Calu3 (cell line): ENCODE measurements at regions of chr11 and their contacts with region 1.

Region 1: DNA sequence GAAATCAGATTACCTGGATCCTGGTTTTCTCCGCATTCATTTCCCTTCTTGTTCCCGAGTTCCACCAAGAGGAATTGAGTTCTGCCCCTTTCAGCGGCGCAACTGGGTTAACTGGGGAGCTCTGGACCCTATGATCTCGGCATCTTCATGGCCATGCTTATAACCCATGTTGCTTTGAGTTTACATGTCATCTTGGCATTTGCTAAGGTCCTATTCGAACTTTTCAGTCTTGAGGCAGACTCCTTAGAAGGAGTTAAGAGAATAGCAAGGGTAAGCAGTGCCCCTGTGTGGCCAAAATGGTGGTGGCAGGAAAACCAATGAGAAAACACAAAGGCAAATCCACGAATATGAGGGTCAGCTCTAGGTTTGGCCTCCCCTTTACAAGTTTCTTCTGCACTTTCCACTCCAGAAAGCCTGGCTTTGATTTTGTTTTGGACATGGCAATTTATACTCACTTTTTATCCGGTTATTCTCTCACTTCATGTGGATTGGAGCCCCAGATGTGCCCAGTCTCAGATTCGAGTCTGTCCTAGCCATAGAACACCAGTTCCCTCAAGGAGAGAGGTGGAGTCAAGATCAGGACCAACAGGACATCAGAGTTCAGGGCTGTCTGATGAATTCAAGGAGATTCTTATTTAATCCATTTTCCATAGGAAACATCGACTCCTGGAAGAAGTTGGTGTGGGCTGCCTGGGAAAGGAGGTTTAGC is 55.3 kb upstream of the FBXO3 start:
- DNase-seq: peak; percentile 71
- H3K4me3 Mint-ChIP-seq: peak overlapping the region; percentile 68
- H3K27ac Mint-ChIP-seq: no peak overlapping the region
- H3K4me1 Mint-ChIP-seq: peaks cover 9% of the 10 kb centered on the region
- H3K27me3 Mint-ChIP-seq: peaks cover 29% of the 10 kb centered on the region
- CTCF ChIP-seq: peak; percentile 75

Region 2: GRCh38 chr11:33362051-33362910 is 467.3 kb before region 1 on chr11:
- CTCF ChIA-PET with region 1: no interaction called
- intact Hi-C with region 1: loop called (anchors 1 kb)
- DNase-seq: peak; percentile 17
- H3K4me3 Mint-ChIP-seq: no peak overlapping the region
- H3K27ac Mint-ChIP-seq: no peak overlapping the region
- H3K4me1 Mint-ChIP-seq: no peaks in the 10 kb centered on the region
- H3K27me3 Mint-ChIP-seq: no peaks in the 10 kb centered on the region
- CTCF ChIP-seq: peak; percentile 54

Region 3: GRCh38 chr11:33542921-33543320 is 286.7 kb before region 1 on chr11:
- CTCF ChIA-PET with region 1: no interaction called
- intact Hi-C with region 1: loop called (anchors 5 kb)
- DNase-seq: peak; percentile 73
- H3K4me3 Mint-ChIP-seq: no peak overlapping the region
- H3K27ac Mint-ChIP-seq: no peak overlapping the region
- H3K4me1 Mint-ChIP-seq: peaks cover 8% of the 10 kb centered on the region
- H3K27me3 Mint-ChIP-seq: no peaks in the 10 kb centered on the region
- CTCF ChIP-seq: peak; percentile 53

Region 4: DNA sequence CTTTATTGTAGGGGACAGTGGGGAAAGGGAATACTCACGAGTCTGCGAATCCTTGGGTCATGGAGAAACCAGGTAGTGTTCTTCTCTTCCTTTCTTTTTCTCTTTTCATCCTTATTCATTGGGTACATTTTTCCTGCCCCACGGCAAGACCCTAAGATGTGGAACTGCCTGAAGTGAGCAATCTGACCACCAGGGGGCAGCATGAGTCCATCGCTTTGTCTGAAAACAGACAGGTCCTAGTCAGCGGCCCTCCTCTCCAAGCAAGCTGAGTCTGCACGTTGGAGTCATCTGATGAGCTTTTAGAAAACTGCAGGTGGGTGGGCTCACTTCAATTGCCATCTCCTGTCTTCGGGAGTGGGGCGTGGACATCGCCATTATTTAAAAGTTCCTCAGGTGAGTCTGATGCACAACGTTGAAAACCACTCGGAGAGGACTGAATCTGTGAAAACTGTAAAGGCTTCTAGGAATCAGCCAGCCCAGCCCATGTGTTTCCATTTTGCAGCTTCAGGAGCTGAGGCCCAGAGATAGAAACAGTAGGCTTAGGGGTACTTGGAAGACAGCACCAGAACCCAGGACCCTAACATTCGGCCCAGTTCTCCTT is 21.3 kb before region 1 on chr11:
- CTCF ChIA-PET with region 1: interaction called, 25 read pairs
- intact Hi-C with region 1: loop called (anchors 1 kb)
- DNase-seq: peak; percentile 89
- H3K4me3 Mint-ChIP-seq: no peak overlapping the region
- H3K27ac Mint-ChIP-seq: no peak overlapping the region
- H3K4me1 Mint-ChIP-seq: peaks cover 12% of the 10 kb centered on the region
- H3K27me3 Mint-ChIP-seq: peaks cover 39% of the 10 kb centered on the region
- CTCF ChIP-seq: peak; percentile 93